Activated CD4-positive, alpha-beta memory T cell treated with anti-CD3 and anti-CD28 coated beads for 36 hours (primary cell): ENCODE measurements at regions of chr12 and their contacts with region 1.

Region 1: DNA sequence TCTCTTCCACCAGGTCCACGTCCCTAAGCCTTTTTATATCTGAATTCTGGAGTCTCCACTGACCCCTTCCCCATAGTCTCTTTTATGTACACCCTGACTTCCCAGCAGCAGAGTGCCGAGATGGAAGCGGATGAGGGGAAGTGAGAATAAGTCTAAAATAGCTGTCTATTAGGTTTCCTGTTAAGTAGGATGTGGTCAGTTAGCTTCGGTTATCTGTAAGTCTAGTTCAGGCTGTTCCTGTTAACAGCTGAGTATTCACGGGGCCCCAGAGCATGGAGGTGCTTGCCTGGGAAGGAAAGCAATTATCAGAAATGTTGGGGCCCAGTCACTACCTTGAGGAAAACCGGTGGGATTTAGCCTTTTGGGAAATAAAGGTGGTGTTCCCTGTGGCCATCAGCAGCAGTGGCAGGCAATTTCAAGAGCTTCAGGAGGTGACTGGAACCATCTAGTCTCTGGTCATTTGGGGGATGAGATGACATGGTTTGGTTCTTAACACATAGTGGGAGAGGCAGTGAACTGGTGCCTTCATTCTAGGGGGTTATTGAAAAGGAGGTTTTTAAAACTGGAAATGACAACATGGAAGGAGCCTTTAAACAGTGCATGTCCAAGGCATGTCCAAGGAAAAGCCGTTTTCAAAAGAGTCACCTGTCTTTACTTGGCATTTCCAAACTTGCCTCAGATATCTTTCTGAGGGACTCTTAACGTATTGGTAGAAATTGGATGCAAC is 21.8 kb downstream of the CHST11 start:
- DNase-seq: peak; percentile 50
- H3K4me3 Mint-ChIP-seq: peak overlapping the region; percentile 84
- H3K27ac Mint-ChIP-seq: peak overlapping the region; percentile 98
- H3K4me1 Mint-ChIP-seq: peaks cover 86% of the 10 kb centered on the region
- H3K27me3 Mint-ChIP-seq: no peaks in the 10 kb centered on the region

Region 2: DNA sequence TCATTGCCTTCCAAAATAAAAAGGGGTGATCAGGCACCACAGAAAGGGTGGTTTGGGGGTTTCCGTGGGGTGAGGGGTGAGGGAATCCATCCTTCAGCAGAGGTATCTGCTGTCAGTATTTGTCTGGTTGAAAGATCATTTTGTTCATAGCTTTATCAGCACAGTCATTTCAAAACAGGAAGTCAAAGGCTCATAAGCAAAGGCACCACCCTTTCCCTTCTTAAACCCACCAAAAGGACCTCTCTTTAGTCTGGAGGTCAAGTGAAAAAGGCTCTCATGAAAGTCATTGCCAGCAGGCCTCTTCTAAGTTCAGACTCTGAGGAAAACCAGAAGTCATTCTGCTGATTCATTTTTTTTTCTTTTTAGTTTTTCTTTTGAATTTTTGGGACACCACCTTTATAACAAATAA is 15.6 kb before region 1 on chr12:
- CTCF ChIA-PET with region 1: interaction called, 12 read pairs
- POLR2A ChIA-PET with region 1: interaction called, 33 read pairs
- intact Hi-C with region 1: loop called (anchors 1 kb)
- DNase-seq: peak; percentile 65
- H3K4me3 Mint-ChIP-seq: peak overlapping the region; percentile 67
- H3K27ac Mint-ChIP-seq: peak overlapping the region; percentile 98
- H3K4me1 Mint-ChIP-seq: peaks cover 76% of the 10 kb centered on the region
- H3K27me3 Mint-ChIP-seq: no peaks in the 10 kb centered on the region

Region 3: DNA sequence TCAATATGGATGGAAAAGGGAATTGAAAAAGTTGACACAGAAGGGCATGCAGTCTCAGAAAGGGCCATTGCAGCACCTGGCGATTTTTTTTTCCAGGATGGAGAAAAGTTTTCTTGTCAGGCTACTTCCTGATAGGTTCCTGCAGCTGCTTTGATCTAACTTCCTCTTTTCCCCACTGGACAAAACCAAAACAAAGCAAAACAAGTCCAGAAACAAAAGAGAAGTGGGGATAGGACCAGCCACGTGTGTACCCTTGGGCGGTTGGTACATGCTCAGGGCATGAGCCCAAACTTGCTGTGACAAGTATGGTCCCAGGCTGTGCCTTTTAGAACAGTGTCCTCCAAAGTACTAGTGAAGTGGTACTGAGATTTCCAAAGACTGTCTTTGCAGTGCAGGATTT is 68.0 kb after region 1 on chr12:
- CTCF ChIA-PET with region 1: no interaction called
- POLR2A ChIA-PET with region 1: no interaction called
- intact Hi-C with region 1: no loop called
- DNase-seq: no peak
- H3K4me3 Mint-ChIP-seq: no peak overlapping the region
- H3K27ac Mint-ChIP-seq: no peak overlapping the region
- H3K4me1 Mint-ChIP-seq: peaks cover 44% of the 10 kb centered on the region
- H3K27me3 Mint-ChIP-seq: no peaks in the 10 kb centered on the region

Region 4: DNA sequence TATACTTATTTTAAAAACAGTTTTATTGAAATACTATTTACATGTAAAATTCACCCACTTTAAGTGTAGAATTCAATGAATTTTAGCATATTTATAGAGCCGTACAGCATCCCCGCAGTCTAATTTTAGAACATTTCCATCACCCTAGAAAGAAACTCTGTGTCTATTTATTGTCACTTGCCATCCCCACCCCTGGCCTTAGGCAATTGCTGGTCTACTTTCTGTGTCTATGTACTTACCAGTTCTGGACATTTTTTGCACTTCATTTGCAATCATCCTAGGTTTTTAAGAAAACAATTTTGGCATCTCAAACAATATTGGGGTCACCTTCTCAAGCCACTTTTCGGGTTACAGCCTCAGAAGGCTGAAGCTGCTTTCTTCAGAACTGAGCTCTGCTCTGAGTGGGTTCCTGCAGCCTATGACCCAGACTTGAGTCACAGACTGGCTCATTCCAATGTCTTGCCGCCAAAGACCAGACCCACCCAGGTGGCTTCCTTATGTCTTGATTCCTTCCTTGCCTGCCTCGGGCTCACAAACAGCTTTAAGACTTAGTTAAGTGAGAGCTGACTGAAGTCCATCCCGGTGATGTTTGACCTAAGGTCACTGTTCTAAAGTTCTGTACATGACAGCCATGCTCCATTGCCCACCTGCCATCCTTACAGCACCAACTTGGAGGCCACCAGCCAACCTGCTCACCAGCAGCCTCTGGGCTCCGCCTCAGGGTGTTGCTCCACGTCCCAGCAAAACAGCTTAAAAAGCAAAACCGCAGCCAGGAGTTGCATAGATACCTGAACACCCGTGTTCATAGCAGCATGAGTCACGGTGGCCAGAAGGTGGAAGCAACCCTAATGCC is 109.7 kb after region 1 on chr12:
- CTCF ChIA-PET with region 1: no interaction called
- POLR2A ChIA-PET with region 1: no interaction called
- intact Hi-C with region 1: no loop called
- DNase-seq: no peak
- H3K4me3 Mint-ChIP-seq: no peak overlapping the region
- H3K27ac Mint-ChIP-seq: no peak overlapping the region
- H3K4me1 Mint-ChIP-seq: peaks cover 31% of the 10 kb centered on the region
- H3K27me3 Mint-ChIP-seq: no peaks in the 10 kb centered on the region